ENCODE measurements at regions of chr13 and their contacts with region 1.

Region 1: DNA sequence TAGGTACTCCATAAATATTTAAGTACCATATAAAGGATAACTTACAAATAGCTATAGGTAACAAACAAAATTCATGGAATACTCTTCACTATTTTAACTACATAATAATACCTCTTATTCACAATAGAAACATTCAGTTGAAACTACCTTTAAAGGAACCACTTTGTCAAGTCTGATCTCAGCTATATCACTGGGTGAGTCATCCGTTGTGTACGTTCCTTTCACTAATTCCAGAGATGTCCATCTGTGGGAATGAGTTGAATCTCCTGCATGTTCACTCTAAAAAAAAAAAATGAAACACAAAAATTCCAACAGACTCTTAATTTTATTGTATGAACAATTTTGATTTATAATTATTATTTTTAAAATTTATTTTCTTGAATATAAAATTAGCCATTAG is 149.4 kb upstream of the FBXL3 start:
- DNase-seq: no peak
- ATAC-seq: no peak
- H3K4me3 ChIP-seq: no peak overlapping the region
- H3K27ac ChIP-seq: no peak overlapping the region
- H3K4me1 ChIP-seq: no peaks in the 10 kb centered on the region
- H3K27me3 ChIP-seq: no peaks in the 10 kb centered on the region
- CTCF ChIP-seq: no peak

Region 2: DNA sequence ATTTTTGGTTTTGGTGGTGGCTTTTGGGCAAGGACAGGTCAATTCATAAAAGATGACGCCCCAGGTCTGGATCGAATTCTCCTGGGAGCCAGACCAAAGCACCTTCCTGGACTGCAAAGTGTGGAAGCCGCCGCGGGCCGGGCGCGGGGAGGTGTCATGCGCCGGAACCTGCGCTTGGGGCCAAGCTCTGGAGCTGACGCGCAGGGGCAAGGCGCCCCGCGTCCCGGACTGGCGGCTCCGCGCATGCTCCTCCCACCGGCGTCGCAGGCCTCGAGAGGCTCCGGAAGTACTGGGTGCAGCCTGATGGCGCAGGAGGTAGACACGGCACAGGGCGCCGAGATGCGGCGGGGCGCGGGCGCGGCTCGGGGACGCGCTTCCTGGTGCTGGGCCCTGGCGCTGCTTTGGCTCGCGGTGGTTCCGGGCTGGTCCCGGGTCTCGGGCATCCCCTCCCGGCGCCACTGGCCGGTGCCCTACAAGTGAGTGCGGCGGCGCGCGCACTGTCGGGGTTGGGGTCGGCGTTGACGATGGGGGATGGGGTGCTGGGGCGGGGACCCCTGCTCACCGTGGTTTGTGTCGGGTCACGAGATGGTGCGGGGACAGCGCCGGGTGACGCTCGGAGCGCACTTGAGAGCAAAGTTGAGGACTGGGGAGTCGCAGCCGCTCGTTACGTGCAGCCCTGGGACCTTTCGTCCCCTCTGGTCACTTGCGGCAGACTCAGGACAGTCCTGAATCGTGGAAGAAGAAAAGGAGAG is 184.4 kb before region 1 on chr13 and contains the start of gene CLN5:
- intact Hi-C with region 1: no loop called
- DNase-seq: peak; percentile 92 to 98 (median 95)
- ATAC-seq: peak; percentile 97 to 99 (median 98)
- H3K4me3 ChIP-seq: peak within 1 kb of the TSS; percentile 58 to 90 (median 70)
- H3K27ac ChIP-seq: peak within 1 kb of the TSS; percentile 49 to 93 (median 88)
- H3K4me1 ChIP-seq: peaks cover 0 to 9% (median 9%) of the 10 kb centered on the region in 3 donors
- H3K27me3 ChIP-seq: no peaks in the 10 kb centered on the region
- CTCF ChIP-seq: peak in 1 of 4 donors; percentile 11
- total RNA-seq, gene CLN5: 14.3 to 24.3 (median 19.4) TPM

Region 3: DNA sequence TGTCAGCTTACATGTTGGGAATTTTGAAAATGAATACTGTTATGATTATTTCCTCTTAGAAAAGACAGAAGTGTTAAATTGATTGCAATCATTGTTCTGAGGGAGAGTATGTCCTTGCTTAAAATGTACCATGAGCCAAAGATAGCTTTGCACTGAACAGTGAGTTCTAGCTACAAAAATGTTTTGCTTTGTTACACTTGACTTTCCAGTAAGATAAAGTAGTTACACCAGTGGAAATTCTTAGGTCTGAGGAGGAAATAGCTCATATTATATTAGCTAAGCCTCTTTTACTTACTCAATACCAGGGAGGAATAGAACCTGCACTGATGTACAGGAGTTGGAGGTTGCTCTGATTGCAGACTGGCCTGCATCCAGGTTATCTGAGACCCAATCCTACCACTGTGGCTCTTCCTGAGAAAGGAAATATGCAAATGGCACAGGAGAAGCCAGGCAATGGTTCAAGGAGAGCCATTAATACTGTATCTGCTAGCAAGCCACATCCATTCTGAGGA is 96.4 kb before region 1 on chr13:
- intact Hi-C with region 1: loop called in 1 of 3 experiments (anchors 10 kb)
- DNase-seq: no peak
- ATAC-seq: no peak
- H3K4me3 ChIP-seq: no peak overlapping the region
- H3K27ac ChIP-seq: no peak overlapping the region
- H3K4me1 ChIP-seq: no peaks in the 10 kb centered on the region
- H3K27me3 ChIP-seq: no peaks in the 10 kb centered on the region
- CTCF ChIP-seq: no peak

Region 4: GRCh38 chr13:77305276-77305675 is 128.9 kb after region 1 on chr13:
- intact Hi-C with region 1: no loop called
- DNase-seq: no peak
- ATAC-seq: no peak
- H3K4me3 ChIP-seq: no peak overlapping the region
- H3K27ac ChIP-seq: no peak overlapping the region
- H3K4me1 ChIP-seq: peaks cover 16 to 34% (median 22%) of the 10 kb centered on the region in 3 donors
- H3K27me3 ChIP-seq: no peaks in the 10 kb centered on the region
- CTCF ChIP-seq: no peak